ENCODE measurements at regions of chr4 and their contacts with region 1.

Region 1: GRCh38 chr4:169791527-169792156 is 33.9 kb upstream of the HPF1 start:
- DNase-seq: peak; percentile 17 to 66
- H3K4me3 ChIP-seq: peak overlapping the region; percentile 25 to 49 (median 29); a peak in 5 of 8 replicates
- H3K27ac ChIP-seq: no peak overlapping the region
- H3K4me1 ChIP-seq: no peaks in the 10 kb centered on the region; a peak in 1 of 7 replicates
- H3K27me3 ChIP-seq: peaks cover 0 to 6% (median 0%) of the 10 kb centered on the region in 4 experiments; a peak in 3 of 7 replicates
- CTCF ChIP-seq: peak in 1 of 3 experiments; percentile 13; a peak in 2 of 4 replicates
- EP300 ChIP-seq: no peak
- POLR2A ChIP-seq: no peak
- RAD21 ChIP-seq: peak; percentile 5 to 29; a peak in 3 of 4 replicates

Region 2: DNA sequence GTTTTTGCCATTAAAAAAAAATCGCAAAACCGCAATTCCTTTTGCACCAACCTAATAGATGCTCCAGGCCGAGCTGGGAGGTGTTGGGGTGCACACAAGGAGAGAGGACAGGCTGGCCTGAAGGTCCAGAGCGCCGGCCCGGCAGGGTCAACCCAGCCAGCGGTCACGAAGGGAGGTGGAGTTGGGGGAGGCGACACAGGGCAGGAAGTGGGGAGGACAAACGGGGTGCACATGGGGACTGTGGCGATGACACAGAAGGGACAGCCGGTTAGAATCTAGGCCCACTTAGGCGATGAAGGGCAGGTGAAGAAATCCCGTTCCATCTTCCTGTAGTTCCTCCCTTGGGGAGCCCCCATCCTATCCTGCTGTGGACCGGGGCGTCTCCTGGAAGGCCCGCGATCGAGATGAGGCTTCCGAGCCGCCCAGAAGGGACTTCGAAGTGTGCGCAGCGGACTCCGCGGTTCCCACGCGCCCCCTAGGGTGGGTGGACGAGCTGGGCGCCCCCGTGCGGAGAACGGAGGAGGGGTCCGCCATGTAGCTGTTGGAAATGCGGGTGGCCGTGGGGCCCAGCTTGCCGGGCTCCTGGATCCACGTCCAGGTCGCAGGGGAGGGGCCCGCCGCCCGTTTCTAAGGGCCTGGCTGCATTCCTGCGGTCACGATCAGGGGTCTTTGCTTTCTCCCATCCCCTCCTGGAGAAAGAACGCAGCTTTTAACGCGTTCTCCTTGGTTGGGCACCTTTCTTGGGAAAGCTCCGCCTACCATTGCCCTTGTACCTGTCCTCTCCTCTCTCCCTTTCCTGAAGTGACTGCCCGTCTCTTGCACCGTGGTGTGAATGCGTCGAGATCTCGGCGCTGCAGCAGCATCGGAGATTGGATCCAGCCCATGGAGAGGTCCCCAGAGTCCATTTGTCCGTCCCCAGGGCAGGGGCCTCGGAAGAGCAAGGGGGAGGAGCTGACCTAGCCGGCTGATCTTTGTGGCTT is 16.9 kb before region 1 on chr4:
- CTCF ChIA-PET with region 1: interaction called, 14 read pairs
- POLR2A ChIA-PET with region 1: no interaction called
- DNase-seq: peak in 1 of 2 experiments; percentile 53
- H3K4me3 ChIP-seq: peak overlapping the region; percentile 25 to 54 (median 40); a peak in 7 of 8 replicates
- H3K27ac ChIP-seq: no peak overlapping the region
- H3K4me1 ChIP-seq: peaks cover 0 to 3% (median 0%) of the 10 kb centered on the region in 4 experiments; a peak in 2 of 7 replicates
- H3K27me3 ChIP-seq: 0 out of 7 replicates have a peak, but pooled peaks cover 0 to 3% (median 0%) of the 10 kb centered on the region in 4 experiments
- CTCF ChIP-seq: peak; percentile 25 to 60 (median 47)
- EP300 ChIP-seq: no peak
- POLR2A ChIP-seq: no peak
- RAD21 ChIP-seq: peak in 1 of 2 experiments; percentile 27; a peak in 2 of 4 replicates

Region 3: DNA sequence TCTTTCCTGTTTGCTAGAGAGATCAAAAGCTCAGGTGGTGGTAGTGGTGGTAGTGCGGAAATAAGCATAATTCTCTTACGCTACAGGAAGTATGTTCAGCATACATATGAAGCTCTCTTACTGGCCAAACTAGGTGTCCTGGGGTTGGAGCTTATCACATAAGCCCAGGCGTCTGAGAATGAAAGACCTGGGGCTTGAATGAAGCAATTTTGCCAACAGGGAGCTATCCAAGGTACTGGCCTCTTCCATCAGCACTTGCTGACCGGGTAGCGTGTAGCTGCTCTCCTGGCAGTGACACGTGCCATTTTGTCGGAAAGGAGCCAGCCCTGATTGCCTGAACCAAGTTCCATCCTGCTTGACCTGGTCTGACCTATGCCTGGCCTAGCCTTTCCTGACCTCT is 32.0 kb after region 1 on chr4:
- CTCF ChIA-PET with region 1: no interaction called
- POLR2A ChIA-PET with region 1: no interaction called
- DNase-seq: peak; percentile 31 to 58
- H3K4me3 ChIP-seq: no peak overlapping the region
- H3K27ac ChIP-seq: no peak overlapping the region
- H3K4me1 ChIP-seq: no peaks in the 10 kb centered on the region
- H3K27me3 ChIP-seq: no peaks in the 10 kb centered on the region
- CTCF ChIP-seq: no peak
- EP300 ChIP-seq: no peak
- POLR2A ChIP-seq: no peak
- RAD21 ChIP-seq: peak in 1 of 2 experiments; percentile 2; a peak in 1 of 4 replicates

Region 4: DNA sequence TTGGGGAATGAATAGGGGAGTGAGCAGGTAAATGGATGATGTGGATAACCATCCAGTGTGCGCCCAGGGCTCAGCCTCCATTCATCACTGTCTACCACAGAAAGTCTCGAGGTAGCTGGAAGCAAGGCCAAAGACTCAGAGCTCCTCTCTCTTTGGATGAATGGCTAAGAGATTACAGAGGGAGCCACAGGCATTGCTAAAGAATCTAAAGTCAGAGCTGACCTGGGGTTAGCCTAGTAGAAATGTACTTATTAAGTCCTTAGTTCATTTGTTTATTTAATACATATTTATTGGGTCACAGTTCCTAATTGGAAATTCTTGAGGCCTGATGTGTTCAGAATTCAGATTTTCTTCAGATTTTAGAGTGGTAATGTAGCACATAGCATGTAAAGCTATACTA is 54.8 kb after region 1 on chr4:
- CTCF ChIA-PET with region 1: no interaction called
- POLR2A ChIA-PET with region 1: no interaction called
- DNase-seq: no peak
- H3K4me3 ChIP-seq: no peak overlapping the region
- H3K27ac ChIP-seq: no peak overlapping the region
- H3K4me1 ChIP-seq: no peaks in the 10 kb centered on the region
- H3K27me3 ChIP-seq: no peaks in the 10 kb centered on the region
- CTCF ChIP-seq: no peak
- EP300 ChIP-seq: no peak
- POLR2A ChIP-seq: no peak
- RAD21 ChIP-seq: no peak

Measured in H1 (cell line).